ENCODE measurements at regions of chr6 and their contacts with region 1.

Region 1: DNA sequence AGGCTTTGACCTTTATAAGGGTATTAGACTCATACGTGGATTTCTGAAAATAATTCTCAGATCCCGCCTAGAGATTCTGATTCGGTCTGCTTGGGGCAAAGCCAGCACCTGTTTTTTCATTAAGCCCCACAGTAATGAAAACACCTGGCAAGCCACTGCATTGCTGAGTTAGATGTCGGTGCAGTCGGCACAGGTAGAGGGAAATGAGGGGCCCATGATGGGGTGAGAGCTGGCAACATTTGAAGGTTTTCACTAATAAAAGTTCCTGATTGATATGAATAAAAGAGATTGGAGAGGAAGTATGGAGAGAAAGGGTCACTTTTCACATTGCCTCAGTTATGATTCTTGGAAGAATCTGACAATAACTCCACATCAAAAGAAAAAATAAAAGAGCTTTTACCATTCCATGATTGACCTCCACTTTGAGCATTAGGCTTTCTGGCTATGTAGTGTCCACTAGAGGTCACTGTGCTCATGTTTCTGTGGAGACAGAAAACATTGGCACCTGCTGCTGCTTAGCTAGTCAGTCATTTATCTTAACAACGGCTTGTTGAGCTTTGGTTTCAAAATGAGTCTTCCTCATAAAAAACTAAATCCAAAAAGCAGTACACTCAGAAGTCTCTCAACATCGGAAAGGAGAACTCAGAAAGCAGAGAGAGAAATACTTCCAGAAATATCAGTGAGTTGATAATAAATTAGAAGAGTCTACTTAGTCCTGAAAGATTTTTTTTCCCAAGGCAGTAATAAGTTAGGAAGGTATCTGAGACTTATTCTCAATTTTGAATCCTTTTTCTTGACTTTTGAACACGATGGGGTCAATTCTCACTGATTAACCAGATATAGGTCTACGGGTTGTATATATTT is 53.3 kb upstream of the KLHL31 start:
- DNase-seq: peak; percentile 68
- ATAC-seq: peak; percentile 93
- H3K4me3 Mint-ChIP-seq: no peak overlapping the region
- H3K27ac Mint-ChIP-seq: no peak overlapping the region
- H3K4me1 Mint-ChIP-seq: peaks cover 10% of the 10 kb centered on the region
- H3K27me3 Mint-ChIP-seq: peaks cover 32% of the 10 kb centered on the region

Region 2: GRCh38 chr6:53707108-53707897 is 11.5 kb before region 1 on chr6:
- CTCF ChIA-PET with region 1: interaction called, 51 read pairs
- DNase-seq: no peak
- ATAC-seq: no peak
- H3K4me3 Mint-ChIP-seq: no peak overlapping the region
- H3K27ac Mint-ChIP-seq: no peak overlapping the region
- H3K4me1 Mint-ChIP-seq: no peaks in the 10 kb centered on the region
- H3K27me3 Mint-ChIP-seq: peaks cover 18% of the 10 kb centered on the region

Region 3: DNA sequence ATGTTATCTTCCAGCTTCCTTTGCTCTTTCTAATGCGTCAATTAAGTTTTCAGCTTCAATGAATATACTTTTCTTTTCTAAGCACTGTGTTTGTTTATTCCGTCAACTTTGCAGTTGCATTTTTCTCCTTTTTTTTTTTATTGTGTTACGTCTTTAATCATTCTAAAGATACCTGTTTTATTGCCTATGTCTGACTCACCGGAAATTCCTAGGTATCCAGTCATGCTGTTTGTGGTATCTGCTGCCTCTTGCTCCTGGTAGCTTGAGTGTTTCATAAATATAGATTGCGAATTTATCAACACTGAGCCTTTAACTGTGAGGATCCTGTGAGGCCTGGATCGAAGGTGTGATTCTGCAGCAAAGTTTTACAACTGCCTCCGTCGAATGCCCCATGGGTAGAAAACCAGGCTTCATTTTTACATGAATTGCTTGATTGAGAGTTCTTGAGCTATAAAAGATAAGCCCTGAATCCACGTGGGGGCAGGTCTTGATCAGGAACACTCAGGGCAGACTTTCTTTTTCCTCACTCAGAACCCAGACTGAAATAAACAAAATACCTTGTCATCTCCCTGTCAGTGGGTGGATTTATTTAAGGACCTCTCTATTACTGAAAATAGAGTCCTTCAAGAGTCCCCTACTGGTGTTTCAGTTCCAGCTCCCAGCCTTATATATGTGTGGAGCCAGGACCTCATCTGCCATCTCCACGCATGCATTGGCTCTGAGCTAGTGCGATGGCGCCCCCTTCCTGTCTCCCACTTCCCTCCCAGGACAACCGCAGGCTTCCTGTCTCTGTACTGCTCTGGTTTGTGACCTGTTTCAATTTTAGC is 15.9 kb after region 1 on chr6:
- CTCF ChIA-PET with region 1: interaction called, 84 read pairs
- DNase-seq: peak; percentile 62
- ATAC-seq: peak; percentile 71
- H3K4me3 Mint-ChIP-seq: peak overlapping the region; percentile 10
- H3K27ac Mint-ChIP-seq: peak overlapping the region; percentile 80
- H3K4me1 Mint-ChIP-seq: peaks cover 51% of the 10 kb centered on the region
- H3K27me3 Mint-ChIP-seq: peaks cover 2% of the 10 kb centered on the region

Region 4: GRCh38 chr6:53794720-53795253 is 76.0 kb after region 1 on chr6 and contains the start of gene LRRC1:
- CTCF ChIA-PET with region 1: interaction called, 21 read pairs
- DNase-seq: peak; percentile 91
- ATAC-seq: peak; percentile 84
- H3K4me3 Mint-ChIP-seq: peak within 1 kb of the TSS; percentile 89
- H3K27ac Mint-ChIP-seq: peak within 1 kb of the TSS; percentile 83
- H3K4me1 Mint-ChIP-seq: peaks cover 24% of the 10 kb centered on the region
- H3K27me3 Mint-ChIP-seq: peaks cover 46% of the 10 kb centered on the region
- total RNA-seq, gene LRRC1: 4.5 to 4.6 TPM

Region 5: DNA sequence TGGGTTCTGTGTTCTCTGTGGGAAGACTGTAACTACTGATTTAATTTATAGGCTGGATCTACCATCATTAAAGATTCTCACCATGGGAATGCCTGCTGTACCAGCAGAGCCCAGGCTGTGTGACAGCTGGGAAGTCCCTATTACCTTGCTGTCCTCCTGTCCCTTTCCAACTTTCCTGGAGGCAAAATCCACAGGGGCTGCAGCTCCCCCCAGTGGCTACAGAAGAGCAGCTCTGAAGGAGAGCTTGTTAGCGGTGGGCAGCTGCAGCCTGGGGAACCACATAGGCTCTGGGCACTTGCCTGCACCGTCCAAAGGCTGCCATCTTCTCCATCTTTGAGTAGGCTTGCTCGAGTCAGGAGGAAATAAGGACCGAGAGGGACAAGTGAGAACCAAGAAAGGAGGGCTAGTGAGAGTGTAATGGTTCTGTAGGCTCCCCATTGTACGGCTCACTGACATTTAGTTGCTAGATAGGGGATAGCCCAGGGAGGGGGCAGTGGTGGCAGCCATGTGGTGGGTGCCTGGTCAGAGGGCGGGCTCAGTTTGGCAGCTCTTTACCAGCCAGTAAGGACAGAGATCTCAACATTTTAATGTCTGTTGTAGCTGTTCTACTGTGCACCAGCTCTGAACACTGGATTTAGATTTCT is 237.4 kb after region 1 on chr6:
- CTCF ChIA-PET with region 1: interaction called, 24 read pairs
- DNase-seq: peak; percentile 51
- ATAC-seq: peak; percentile 58
- H3K4me3 Mint-ChIP-seq: no peak overlapping the region
- H3K27ac Mint-ChIP-seq: no peak overlapping the region
- H3K4me1 Mint-ChIP-seq: no peaks in the 10 kb centered on the region
- H3K27me3 Mint-ChIP-seq: peaks cover 27% of the 10 kb centered on the region

Measured in activated CD8-positive, alpha-beta memory T cell treated with anti-CD3 and anti-CD28 coated beads, Interleukin-2, amount 10 ng/mL, durations not matched to agents 7 days and 5 days (primary cell).